Activated T-helper 1 cell treated with anti-CD3 and anti-CD28 coated beads, Interleukin-12 subunit alpha, Interleukin-12 subunit beta, Interleukin-2, Interleukin-4 antibody, amounts not matched to agents 30 ng/mL and 10 ng/mL and 1 ng/mL, durations not matched to agents 14 hours and 24 hours and 36 hours (primary cell): ENCODE measurements at regions of chr1 and their contacts with region 1.

Region 1: DNA sequence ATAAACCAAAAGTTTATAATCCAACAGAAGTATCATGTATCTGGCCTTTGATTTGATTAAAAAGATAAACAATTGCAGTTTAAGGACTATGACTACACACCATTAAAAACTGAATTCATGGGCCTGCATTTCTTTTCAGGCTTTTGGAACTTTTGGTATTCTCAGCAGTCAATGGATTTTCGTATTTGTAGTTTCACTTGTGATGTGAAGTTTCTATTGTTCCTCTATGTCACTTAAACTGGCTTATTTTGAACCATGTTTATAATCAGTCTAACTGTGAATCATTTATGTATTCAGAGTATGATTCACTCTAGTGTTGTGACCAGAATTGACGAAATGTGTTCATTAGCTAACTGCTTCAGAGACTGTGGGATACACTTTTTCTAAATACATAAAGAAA is 132.9 kb downstream of the COQ8A start:
- DNase-seq: no peak
- H3K4me3 Mint-ChIP-seq: no peak overlapping the region
- H3K27ac Mint-ChIP-seq: no peak overlapping the region
- H3K4me1 Mint-ChIP-seq: peaks cover 6% of the 10 kb centered on the region
- H3K27me3 Mint-ChIP-seq: peaks cover 9% of the 10 kb centered on the region

Region 2: GRCh38 chr1:226915672-226915995 is 157.4 kb before region 1 on chr1:
- intact Hi-C with region 1: loop called (anchors 1 kb)
- DNase-seq: no peak
- H3K4me3 Mint-ChIP-seq: no peak overlapping the region
- H3K27ac Mint-ChIP-seq: peak overlapping the region; percentile 7
- H3K4me1 Mint-ChIP-seq: peaks cover 28% of the 10 kb centered on the region
- H3K27me3 Mint-ChIP-seq: no peaks in the 10 kb centered on the region